Lower leg skin (tissue), 4 donors: ENCODE measurements at regions of chr13 and their contacts with region 1.

Region 1: DNA sequence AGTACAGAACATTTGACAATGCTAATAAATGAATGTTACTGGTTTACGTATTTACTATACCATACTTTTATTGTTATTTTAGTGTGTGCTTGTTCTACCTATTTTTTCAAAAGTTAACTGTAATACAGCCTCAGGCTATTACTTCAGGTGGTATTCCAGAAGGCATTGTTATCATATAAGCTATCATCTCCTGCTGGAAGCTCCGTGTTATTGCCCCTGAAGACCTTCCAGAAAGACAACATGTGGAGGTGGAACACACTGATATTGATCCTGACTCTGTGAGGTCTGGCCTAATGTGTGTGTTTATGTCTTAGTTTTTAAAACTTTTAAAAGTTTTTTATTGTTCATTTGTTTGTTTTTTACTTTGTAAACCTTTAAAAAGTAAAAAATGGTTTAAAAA is 509.8 kb upstream of the SPRY2 start:
- DNase-seq: no peak
- H3K4me3 ChIP-seq: no peak overlapping the region
- CTCF ChIP-seq: no peak
- POLR2A ChIP-seq: no peak

Region 2: DNA sequence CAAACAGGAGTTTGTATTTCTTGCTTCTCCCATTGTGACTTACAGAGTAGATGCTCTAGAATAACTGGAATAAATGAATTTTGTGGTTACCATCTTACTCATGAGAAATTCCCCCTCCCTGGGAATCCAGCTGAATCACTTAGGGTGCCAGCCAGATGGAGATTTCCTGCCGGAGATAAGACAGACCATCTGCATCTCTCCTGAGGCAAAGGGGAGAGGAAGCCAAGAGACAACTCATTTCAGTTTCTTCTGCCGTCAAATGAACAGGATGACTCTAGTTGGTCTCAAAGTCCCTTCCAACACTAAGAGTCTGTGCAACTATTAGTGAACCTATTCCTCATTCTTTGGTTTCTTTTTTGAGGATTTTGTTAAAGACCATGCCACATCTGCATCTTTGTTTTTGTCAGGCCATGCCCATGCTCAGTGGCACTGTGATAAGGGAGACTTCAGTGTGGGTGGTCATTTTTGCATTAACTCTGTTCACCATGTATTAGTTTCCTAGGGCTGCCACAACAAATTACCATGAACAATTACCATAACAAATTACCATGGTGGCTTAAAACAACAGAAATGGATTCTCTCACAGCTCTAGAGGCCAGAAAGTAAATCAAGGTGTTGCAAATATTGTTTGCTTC is 1257.0 kb before region 1 on chr13:
- intact Hi-C with region 1: loop called (anchors 5 kb)
- DNase-seq: no peak
- H3K4me3 ChIP-seq: no peak overlapping the region
- CTCF ChIP-seq: no peak
- POLR2A ChIP-seq: no peak

Region 3: DNA sequence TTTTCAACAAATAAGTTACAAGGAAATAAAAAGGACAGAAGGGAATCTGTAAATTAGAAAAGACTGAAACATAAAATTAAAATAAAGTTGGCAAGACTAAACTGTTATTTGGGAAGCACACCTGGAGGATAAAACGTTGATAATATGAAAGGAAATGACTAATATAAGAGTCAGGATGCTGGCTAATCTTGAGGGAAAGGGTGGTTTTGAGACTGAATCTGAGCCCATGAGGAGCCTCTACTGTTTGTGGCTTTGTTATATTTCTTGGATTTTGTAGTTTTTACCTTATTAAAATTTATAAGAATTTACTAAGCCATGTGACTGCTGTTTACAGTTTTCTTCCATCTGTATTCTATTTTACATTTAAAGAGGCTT is 208.1 kb after region 1 on chr13:
- intact Hi-C with region 1: no loop called
- DNase-seq: no peak
- H3K4me3 ChIP-seq: no peak overlapping the region
- CTCF ChIP-seq: no peak
- POLR2A ChIP-seq: no peak